AG04450 (cell line): ENCODE measurements at regions of chr12 and their contacts with region 1.

Region 1: DNA sequence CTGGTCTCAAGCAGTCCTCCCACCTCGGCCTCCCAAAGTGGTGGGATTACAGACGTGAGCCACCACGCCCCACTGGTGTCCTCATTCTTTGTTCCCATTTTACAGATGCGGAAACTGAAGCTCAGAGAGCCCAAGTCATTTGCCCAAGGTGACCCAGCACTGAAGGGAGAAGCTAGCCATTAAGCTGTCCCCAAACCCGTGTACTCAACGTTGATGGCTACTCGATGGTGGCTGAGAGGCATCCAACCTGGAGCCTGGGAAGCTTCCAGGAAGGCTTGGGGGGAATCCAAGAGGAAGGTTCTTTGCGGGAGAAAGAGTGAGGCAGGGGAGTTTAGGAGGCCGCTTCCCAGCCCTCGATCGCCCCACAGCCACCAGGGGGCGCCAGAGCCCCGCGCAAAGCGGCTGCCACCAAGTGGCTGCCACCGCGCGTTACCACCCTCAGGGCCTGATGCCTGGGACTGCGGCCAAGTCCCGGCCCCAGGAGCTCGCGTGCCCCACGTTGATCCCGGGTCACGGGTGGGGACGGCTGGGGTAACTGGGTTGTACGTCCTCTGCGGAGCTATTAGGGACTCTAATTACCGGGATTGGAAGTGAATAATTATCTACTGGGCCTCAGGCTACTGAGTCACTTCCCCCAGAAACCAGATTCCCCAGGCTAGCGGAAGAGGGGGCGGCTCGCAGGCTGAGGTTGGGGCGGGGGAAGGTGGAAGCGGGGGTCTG is 8.8 kb upstream of the SH2B3 start:
- DNase-seq: peak; percentile 63
- H3K4me3 ChIP-seq: peak overlapping the region; percentile 45
- H3K27ac ChIP-seq: peak overlapping the region; percentile 65
- H3K27me3 ChIP-seq: no peaks in the 10 kb centered on the region
- CTCF ChIP-seq: peak; percentile 99

Region 2: GRCh38 chr12:111074559-111074958 is 322.3 kb before region 1 on chr12:
- CTCF ChIA-PET with region 1: no interaction called
- POLR2A ChIA-PET with region 1: no interaction called
- DNase-seq: no peak
- H3K4me3 ChIP-seq: no peak overlapping the region
- H3K27ac ChIP-seq: no peak overlapping the region
- H3K27me3 ChIP-seq: peaks cover 10% of the 10 kb centered on the region
- CTCF ChIP-seq: no peak

Region 3: GRCh38 chr12:111384596-111384995 is 12.3 kb before region 1 on chr12:
- CTCF ChIA-PET with region 1: interaction called, 30 read pairs
- POLR2A ChIA-PET with region 1: no interaction called
- DNase-seq: no peak
- H3K4me3 ChIP-seq: no peak overlapping the region
- H3K27ac ChIP-seq: no peak overlapping the region
- H3K27me3 ChIP-seq: peaks cover 7% of the 10 kb centered on the region
- CTCF ChIP-seq: no peak

Region 4: DNA sequence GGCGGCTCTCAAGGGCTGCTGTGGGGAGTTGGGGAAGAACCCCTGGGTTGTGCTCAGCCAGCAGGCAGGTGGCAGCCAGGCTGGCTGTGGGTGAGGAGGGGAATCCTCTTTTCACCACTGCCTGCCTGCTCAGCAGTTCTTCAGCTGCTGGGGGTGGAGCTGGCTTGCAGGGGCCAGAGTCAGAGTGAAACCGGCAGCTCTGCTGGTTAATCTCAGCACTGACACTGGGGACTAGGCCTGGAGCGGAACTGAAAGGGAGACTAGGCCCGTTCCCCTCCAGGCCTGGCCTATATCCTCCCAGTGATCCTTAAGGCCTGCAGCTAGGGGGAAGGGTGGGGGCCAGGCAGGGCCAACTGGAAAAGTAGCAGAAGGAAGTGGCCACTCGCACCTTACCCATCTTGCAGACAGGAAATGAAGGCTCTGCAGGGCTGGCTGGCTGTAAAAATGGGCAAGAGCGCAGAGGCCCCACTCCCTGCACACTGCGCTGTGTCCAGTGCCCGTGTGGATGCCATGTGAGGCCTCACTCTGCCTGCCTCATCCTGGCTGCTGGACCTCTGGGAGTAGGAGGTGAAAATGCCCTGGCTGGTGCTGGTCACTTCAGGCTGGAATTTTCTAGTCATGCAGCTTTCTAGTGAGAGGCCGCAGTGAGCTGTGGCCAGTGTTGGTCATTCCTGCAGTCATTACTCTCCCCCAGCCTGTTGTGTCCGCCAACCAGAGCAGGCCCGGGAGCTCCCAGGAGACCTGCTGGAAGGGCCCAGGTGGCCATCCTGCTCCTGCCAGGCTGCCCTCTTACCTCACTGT is 48.2 kb after region 1 on chr12:
- CTCF ChIA-PET with region 1: interaction called, 349 read pairs
- POLR2A ChIA-PET with region 1: no interaction called
- DNase-seq: no peak
- H3K4me3 ChIP-seq: no peak overlapping the region
- H3K27ac ChIP-seq: peak overlapping the region; percentile 52
- H3K27me3 ChIP-seq: no peaks in the 10 kb centered on the region
- CTCF ChIP-seq: no peak

Region 5: GRCh38 chr12:111471236-111471635 is 74.3 kb after region 1 on chr12:
- CTCF ChIA-PET with region 1: interaction called, 23 read pairs
- POLR2A ChIA-PET with region 1: no interaction called
- DNase-seq: no peak
- H3K4me3 ChIP-seq: no peak overlapping the region
- H3K27ac ChIP-seq: no peak overlapping the region
- H3K27me3 ChIP-seq: no peaks in the 10 kb centered on the region
- CTCF ChIP-seq: no peak

Region 6: DNA sequence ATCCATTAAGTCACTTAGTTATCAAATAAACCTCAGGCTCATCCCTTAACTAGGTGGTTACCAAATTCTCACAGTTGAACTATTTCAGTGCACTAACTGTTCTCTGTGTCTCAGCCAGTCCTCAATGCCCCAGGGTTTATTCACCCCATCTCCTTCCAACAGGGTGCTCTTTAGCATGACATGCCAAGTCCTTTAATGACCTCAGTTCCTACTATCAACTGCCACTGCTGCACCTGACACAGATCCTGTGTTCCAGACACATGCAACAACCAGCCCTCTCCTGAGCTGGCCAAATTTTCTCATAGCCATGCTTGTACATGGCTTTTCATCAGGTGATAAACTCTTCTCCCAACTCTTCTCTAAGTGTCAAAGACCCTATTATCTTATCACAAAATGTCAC is 122.2 kb after region 1 on chr12:
- CTCF ChIA-PET with region 1: interaction called, 11 read pairs
- POLR2A ChIA-PET with region 1: no interaction called
- DNase-seq: no peak
- H3K4me3 ChIP-seq: no peak overlapping the region
- H3K27ac ChIP-seq: no peak overlapping the region
- H3K27me3 ChIP-seq: no peaks in the 10 kb centered on the region
- CTCF ChIP-seq: no peak

Region 7: GRCh38 chr12:111673503-111673902 is 276.6 kb after region 1 on chr12:
- CTCF ChIA-PET with region 1: interaction called, 50 read pairs
- POLR2A ChIA-PET with region 1: no interaction called
- DNase-seq: no peak
- H3K4me3 ChIP-seq: no peak overlapping the region
- H3K27ac ChIP-seq: no peak overlapping the region
- H3K27me3 ChIP-seq: no peaks in the 10 kb centered on the region
- CTCF ChIP-seq: peak; percentile 62